Kidney (tissue), 22 donors: ENCODE measurements at regions of chr17 and their contacts with region 1.

Region 1: GRCh38 chr17:48791128-48792032 is 25.6 kb downstream of the TTLL6 start:
- DNase-seq: peak in 4 of 5 donors; percentile 86 to 96 (median 90)
- H3K4me3 ChIP-seq: no peak overlapping the region
- H3K27ac ChIP-seq: peak overlapping the region; percentile 44 to 59
- H3K4me1 ChIP-seq: peaks cover 0 to 37% (median 35%) of the 10 kb centered on the region in 3 donors
- H3K27me3 ChIP-seq: no peaks in the 10 kb centered on the region
- CTCF ChIP-seq: peak; percentile 78

Region 2: DNA sequence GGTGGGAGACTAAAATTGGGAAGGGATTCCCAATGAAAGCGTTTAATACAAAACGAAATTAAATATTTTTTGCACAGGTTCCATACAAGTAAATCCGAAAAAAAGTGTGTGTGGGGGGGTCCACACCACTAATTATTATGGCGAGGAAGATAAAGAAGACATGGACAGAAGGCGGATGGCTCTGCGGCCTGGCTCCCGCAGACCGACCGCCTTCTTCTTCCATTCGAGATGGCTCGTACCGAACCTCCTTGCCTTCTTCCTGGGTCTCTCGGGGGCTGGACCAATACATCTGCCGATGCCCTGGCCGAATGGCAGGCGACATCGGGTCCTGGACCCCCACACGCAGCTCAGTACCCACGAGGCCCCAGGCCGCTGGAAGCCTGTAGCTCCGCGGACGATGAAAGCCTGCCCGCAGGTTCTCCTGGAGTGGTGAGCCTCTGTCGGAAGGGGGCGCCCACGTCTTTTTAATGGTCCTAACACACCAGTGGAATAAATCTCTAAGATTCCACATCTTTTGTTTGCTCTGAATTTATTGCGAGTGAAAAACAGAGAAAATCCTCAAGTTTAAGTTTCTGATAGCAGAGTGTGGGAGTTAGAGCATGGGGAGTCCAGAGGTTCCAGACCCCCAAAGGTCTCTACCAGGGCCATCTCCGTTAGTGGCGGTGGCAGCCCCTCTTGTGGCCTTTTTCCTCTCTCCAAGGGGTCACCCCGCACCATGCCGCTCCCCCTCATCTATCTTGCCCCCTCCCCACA is 67.0 kb before region 1 on chr17:
- intact Hi-C with region 1: loop called (anchors 10 kb)
- DNase-seq: peak; percentile 88 to 94 (median 92)
- H3K4me3 ChIP-seq: peak overlapping the region in 1 of 3 donors; percentile 20
- H3K27ac ChIP-seq: no peak overlapping the region
- H3K4me1 ChIP-seq: peaks cover 0 to 7% (median 0%) of the 10 kb centered on the region in 3 donors
- H3K27me3 ChIP-seq: peaks cover 92% of the 10 kb centered on the region
- CTCF ChIP-seq: peak; percentile 73

Region 3: DNA sequence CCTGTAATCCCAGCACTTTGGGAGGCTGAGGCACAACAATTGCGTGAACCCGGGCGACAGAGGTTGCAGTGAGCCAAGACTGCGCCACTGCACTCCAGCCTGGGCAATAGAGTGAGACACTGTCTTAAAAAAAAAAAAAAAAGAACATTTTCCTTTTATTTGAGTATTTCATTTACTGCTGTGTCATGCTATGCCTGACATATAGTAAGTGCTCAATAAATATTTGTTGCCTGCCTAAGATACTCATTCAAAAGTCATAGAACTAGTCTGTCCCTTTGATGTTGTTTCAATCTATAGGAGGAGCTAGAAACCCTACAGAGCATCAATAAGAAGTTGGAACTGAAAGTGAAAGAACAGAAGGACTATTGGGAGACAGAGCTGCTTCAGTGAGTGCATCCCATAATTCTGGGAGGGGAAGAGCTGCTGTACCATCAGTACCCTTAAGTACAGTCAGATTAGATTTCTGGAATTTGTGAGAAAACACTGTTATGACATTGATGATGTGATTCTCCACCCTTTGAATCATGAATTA is 59.5 kb after region 1 on chr17:
- intact Hi-C with region 1: no loop called
- DNase-seq: no peak
- H3K4me3 ChIP-seq: no peak overlapping the region
- H3K27ac ChIP-seq: no peak overlapping the region
- H3K4me1 ChIP-seq: no peaks in the 10 kb centered on the region
- H3K27me3 ChIP-seq: no peaks in the 10 kb centered on the region
- CTCF ChIP-seq: no peak

Region 4: DNA sequence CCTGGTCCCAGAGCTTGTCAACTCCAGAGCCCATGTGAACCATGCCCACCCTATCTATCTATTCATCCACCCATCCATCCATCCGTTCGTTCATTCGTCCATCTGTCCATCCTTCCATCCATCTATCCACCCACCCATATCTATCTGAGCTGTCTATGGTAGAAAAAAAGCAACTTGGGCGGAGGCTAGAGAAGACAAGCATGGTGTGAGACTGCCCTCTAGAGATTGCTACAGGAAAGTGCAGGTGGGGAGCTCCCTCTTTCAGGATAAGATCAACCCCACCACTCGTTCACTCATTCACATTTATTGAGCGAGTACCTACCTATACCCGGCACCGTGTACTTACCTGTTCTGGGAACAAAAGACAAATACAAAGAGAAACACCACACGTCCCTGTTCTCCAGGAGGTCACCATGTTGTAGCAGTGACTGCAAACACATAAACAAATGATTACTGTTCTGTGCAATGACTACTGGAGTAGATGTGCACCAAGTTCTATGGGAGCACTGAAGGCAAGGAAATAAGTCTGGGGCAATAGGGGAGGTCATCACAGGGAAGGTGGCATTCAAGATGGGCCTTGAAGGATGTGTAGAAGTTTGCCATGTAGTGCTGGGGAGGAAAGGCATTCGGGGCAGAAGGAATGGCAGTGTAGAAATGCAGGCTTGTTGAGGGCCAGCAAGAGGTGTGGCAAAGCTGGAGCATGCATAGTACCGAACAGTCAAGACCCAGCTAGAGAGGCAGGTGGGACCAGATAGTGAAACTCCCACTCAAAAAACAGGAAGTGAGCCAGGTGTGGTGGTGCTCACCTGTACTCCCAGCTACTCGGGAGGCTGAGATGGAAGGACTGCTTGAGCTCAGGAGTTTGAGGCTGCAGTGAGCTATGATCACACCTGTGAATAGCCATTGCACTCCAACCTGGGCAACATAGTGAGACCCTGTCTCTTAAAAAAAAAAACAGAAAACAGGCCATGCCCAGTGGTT is 87.8 kb after region 1 on chr17:
- intact Hi-C with region 1: no loop called
- DNase-seq: peak in 4 of 5 donors; percentile 61 to 85 (median 74)
- H3K4me3 ChIP-seq: no peak overlapping the region
- H3K27ac ChIP-seq: no peak overlapping the region
- H3K4me1 ChIP-seq: no peaks in the 10 kb centered on the region
- H3K27me3 ChIP-seq: no peaks in the 10 kb centered on the region
- CTCF ChIP-seq: peak; percentile 94